ENCODE measurements at regions of chr10 and their contacts with region 1.

Region 1: DNA sequence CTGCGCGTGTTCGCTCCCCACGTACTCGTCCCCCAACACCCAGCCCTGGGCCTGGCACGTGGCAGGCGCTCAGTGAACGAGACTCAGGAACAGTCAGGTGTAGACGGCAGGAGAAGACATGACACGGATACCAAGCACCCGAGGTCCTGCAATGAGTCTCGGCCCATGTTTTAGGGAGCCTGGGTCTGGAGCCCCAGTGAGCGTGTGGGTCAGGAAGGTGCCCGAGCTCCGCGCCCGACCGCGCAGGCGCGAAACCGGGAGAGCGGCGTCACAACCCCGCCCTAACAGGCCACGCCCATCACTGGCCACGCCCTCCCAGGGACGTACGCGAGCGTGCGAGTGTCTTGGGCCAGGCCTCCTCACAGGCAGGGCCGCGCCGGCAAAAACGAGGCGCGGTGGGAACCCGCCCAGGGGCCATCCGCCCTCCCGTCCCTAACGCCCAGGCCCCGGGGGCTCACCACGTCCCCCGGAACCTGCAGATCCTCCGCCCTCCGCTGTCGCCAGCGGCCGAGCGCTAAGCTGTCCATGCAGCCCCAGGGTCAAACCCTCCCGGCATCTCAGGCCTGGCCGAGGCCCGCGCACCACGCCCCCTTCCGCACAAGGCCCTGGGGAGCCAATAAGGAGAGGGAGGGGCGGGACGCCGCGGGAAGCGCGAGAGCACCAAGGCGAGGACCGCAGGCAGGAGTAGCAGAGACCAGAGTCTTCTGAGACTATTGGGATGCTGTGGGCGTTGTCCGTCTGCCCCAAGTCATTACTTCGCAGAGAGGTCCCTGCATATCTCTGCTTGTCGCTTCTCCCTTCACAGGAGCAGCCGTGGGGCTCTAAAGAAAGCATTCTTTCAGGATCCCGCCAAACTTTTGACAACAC is at the start of gene C10orf143:
- DNase-seq: peak; percentile 98 to 99 (median 98)
- ATAC-seq: peak; percentile 96 to 97 (median 96)
- H3K4me3 ChIP-seq: peak within 1 kb of the TSS; percentile 52 to 89 (median 78)
- H3K27ac ChIP-seq: peak within 1 kb of the TSS; percentile 74 to 97 (median 94)
- H3K4me1 ChIP-seq: peaks cover 0 to 26% (median 16%) of the 10 kb centered on the region in 12 donors
- H3K27me3 ChIP-seq: no peaks in the 10 kb centered on the region
- CTCF ChIP-seq: no peak
- POLR2A ChIP-seq: peak; percentile 9 to 86
- total RNA-seq, gene C10orf143: 0.32 to 3.3 (median 1.6) TPM in 8 of 9 donors, not detected in the other

Region 2: DNA sequence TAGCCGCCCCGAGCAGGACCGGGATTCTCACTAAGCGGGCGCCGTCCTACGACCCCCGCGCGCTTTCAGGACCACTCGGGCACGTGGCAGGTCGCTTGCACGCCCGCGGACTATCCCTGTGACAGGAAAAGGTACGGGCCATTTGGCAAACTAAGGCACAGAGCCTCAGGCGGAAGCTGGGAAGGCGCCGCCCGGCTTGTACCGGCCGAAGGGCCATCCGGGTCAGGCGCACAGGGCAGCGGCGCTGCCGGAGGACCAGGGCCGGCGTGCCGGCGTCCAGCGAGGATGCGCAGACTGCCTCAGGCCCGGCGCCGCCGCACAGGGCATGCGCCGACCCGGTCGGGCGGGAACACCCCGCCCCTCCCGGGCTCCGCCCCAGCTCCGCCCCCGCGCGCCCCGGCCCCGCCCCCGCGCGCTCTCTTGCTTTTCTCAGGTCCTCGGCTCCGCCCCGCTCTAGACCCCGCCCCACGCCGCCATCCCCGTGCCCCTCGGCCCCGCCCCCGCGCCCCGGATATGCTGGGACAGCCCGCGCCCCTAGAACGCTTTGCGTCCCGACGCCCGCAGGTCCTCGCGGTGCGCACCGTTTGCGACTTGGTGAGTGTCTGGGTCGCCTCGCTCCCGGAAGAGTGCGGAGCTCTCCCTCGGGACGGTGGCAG is 643.6 kb before region 1 on chr10 and contains the start of gene MGMT:
- intact Hi-C with region 1: loop called in 1 of 10 experiments (anchors 5 kb)
- DNase-seq: peak; percentile 94 to 98 (median 96)
- ATAC-seq: peak; percentile 93 to 99 (median 98)
- H3K4me3 ChIP-seq: peak within 1 kb of the TSS; percentile 66 to 91 (median 82)
- H3K27ac ChIP-seq: peak within 1 kb of the TSS; percentile 26 to 93 (median 86)
- H3K4me1 ChIP-seq: peaks cover 0 to 18% (median 11%) of the 10 kb centered on the region in 12 donors
- H3K27me3 ChIP-seq: no peaks in the 10 kb centered on the region
- CTCF ChIP-seq: no peak
- POLR2A ChIP-seq: peak in 1 of 2 donors; percentile 81
- total RNA-seq, gene MGMT: 6.2 to 25.3 (median 14.8) TPM

Region 3: DNA sequence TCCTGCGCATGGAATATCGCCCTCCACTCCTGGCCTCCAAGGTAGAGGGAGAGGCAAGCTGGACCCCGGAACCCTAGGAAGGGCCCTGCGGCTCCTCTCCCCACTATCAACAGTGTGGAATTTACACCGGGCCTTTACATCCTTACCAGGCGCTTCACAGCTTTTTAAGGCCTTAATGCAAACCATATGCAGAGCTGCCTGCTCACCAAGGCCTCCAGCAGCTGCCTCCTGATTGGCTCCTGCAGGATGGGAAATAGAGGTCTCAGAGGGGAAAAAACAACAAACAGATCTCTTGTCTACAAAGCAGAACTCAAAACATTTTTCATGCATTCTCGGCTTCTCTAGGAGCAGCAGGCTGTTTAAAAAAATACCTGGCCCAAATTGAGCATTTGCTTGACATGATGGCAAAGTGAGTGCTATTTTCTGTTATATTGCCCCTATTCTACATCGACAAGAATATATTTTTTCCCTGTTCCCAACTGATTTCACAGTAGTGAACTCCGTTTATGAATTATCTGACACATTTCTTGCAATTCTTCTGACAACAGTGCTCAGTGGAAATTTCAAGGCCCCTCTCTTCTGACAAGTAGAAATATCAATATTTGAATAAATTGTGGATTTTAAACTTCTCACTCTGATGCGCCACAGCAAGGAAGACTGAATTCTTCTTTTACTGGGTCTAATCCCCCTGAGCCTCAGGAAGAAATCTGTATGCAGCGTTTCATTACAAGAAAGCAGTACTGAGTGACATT is 198.1 kb before region 1 on chr10:
- intact Hi-C with region 1: no loop called
- DNase-seq: peak in 1 of 5 donors; percentile 3
- ATAC-seq: no peak
- H3K4me3 ChIP-seq: no peak overlapping the region
- H3K27ac ChIP-seq: no peak overlapping the region
- H3K4me1 ChIP-seq: peaks cover 0 to 46% (median 5%) of the 10 kb centered on the region in 12 donors
- H3K27me3 ChIP-seq: no peaks in the 10 kb centered on the region
- CTCF ChIP-seq: no peak
- POLR2A ChIP-seq: no peak

Region 4: GRCh38 chr10:130136226-130137089 is 26.0 kb after region 1 on chr10 and contains the start of gene GLRX3:
- intact Hi-C with region 1: loop called in 8 of 10 experiments (anchors 1 to 2 kb)
- DNase-seq: peak; percentile 91 to 94 (median 93)
- ATAC-seq: peak; percentile 87 to 98 (median 98)
- H3K4me3 ChIP-seq: peak within 1 kb of the TSS; percentile 78 to 100 (median 96)
- H3K27ac ChIP-seq: peak within 1 kb of the TSS; percentile 76 to 94 (median 91)
- H3K4me1 ChIP-seq: peaks cover 5 to 45% (median 30%) of the 10 kb centered on the region in 12 donors
- H3K27me3 ChIP-seq: no peaks in the 10 kb centered on the region
- CTCF ChIP-seq: peak in 1 of 12 donors; percentile 11
- POLR2A ChIP-seq: peak in 1 of 2 donors; percentile 72
- total RNA-seq, gene GLRX3: 54.0 to 127 (median 66.4) TPM